GM10248 (cell line): ENCODE measurements at regions of chr4 and their contacts with region 1.

Region 1: DNA sequence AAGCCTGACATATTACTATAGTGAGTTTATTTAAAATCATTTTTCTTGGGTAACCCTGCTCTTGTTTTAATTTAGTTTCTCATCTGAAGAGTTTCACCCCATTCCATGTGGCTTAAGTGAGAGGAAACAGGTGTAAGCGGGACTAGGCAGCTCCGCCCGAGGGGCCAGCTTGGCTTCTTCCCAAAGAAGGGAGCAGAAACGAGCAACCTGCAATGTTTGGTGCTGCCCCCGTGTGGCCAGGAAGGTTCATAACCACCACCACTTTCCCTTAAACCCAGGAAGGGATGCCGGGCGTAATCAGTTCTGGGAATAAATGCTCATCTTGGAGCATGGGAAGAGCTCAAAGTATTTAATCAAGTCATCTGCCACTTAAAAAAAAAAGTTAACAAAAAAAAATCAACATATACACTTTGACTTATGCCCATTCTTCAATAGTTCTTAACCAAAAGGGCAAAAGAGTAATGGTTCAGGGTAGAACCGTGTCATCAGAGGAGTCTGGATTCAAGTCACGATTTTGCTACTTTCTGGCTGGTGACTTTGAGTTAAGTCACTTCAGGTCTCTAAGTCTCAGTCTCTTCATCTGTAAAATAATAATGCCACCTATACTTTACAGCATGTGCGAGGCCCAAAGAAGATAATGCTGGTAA is 147.9 kb downstream of the NSUN7 start:
- DNase-seq: peak; percentile 83
- CTCF ChIP-seq: peak; percentile 72

Region 2: DNA sequence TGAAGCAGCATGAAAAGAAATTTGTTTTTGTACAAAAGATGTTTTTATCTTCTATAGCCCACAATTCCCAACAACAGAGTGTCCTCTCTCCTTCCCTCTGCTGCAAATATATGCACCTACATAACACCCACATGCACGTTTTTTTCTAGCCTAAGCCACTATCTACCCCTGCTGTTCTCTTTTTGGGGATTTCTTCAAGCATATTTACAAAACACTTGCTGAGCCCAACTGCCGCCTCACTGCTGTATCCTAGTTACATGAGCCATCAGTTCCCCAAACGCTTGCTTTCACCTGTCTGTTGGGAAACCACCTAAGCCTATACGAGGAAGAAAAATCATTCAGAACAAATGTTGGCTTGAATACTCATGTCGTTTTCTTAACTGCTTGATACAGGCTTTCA is 435.4 kb before region 1 on chr4:
- CTCF ChIA-PET with region 1: no interaction called
- POLR2A ChIA-PET with region 1: no interaction called
- DNase-seq: peak; percentile 70
- CTCF ChIP-seq: no peak

Region 3: DNA sequence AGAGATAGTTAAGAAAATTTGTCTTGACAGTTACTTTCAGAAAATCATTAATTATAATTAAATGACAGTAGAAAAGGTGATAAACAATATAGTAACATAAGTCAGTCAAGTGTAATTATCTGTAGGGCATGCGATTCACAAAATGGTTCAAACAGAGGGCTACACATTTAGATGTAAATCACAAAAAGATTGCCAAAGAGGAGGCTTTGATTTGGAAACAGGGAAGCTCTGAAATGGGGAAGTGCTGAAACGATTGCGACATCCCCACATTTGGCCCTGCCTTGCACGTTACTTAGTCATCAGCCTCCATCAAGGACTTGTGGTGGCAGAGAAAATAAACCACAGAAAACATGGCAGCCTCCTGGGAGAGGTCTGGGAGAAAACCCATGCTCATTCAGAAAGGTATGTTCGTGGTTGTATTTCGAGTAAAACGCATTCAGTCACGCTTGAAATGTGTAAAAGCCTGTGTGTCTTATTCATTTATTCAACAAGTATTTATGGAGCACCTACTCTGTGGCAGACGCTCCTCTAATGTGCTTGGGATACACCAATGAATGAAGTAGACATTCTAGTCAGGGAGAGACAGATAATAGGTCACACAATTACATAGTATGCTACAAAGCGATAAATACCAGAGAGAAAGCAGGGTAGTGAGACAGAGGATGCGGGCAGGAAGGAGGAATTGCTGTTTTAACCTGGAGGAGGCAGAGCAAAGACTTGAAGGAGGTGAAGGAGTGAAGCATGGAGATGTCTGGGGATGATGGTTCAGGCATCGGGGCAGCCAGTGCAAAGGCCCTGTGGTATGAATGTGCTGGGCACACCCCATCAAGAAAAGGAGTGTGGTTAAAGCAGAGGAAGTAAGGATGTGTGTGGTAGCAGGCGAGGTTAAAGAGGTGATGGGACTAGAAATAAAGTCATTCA is 275.8 kb before region 1 on chr4:
- CTCF ChIA-PET with region 1: no interaction called
- POLR2A ChIA-PET with region 1: no interaction called
- DNase-seq: peak; percentile 56
- CTCF ChIP-seq: no peak

Region 4: DNA sequence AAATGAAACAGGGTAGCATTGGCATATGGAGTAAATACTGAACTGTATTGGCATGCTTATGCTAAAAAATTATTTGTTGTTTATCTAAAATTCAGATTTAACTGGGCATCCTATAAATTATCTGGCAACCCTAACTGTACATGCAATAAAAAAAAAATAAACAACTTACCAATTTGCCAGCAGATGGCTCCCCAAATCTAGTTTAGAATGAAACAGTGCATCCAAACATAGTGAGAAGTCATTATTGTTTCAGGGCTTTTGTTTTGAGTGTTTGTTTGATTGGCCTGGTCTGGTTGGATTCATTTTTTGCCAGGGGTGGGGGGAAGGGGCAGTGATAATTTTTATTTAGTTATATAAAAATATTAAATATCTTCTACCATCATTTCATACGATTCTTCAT is 160.8 kb before region 1 on chr4:
- CTCF ChIA-PET with region 1: interaction called, 27 read pairs
- POLR2A ChIA-PET with region 1: interaction called, 3 read pairs
- DNase-seq: peak; percentile 55
- CTCF ChIP-seq: peak; percentile 37

Region 5: DNA sequence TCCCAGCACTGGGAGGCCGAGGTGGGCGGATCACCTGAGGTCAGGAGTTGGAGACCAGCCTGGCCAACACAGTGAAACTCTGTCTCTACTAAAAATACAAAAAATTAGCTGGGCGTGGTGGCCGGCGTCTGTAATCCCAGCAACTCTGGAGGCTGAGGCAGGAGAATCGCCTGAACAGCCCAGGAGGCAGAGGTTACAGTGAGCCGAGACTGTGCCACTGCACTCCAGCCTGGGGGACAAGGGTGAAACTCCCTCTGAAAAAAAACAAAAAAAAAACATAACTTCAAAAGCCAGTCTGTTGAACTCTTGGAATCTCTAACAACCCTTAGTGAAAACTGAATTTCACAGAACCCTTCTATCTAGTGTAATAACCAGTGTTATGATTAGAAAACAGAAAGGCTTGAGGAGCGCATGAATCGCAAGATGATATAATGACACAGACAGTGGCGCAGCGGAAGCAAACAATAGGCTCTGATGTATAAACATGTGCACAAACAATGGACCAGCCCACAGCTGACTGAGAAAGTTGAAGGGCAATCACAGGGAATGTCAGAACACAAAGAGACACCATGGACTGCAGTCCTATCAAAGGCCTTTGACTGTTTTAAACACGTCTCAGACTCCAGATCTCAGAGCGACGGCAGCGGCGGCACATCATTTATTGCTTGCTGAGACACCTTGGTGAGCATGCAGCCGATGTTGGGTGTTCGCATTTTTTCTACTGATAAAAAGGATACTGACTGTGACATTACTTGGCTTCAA is 66.4 kb before region 1 on chr4:
- CTCF ChIA-PET with region 1: no interaction called
- POLR2A ChIA-PET with region 1: no interaction called
- DNase-seq: no peak
- CTCF ChIP-seq: no peak

Region 6: DNA sequence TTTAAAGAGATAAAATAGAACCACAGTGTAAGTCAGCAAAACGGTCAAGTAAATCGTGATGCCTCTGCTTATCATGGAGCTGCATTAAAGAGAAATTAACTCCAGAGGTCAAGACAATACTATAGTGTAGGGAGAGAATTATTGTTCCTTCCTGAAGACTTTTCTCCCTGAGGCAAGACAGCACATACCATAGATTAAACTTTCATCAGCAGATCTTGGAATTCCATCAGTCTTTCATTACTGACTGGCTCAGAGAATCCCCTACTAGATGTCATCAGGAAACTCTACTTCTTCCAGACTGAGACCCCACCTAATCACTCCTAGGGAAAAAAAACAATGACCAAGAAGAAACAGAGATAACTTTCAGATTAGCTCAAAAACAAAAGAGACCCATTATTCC is 16.6 kb before region 1 on chr4:
- CTCF ChIA-PET with region 1: interaction called, 14 read pairs
- POLR2A ChIA-PET with region 1: no interaction called
- DNase-seq: no peak
- CTCF ChIP-seq: no peak

Region 7: GRCh38 chr4:40887288-40888131 is 10.2 kb before region 1 on chr4:
- CTCF ChIA-PET with region 1: interaction called, 25 read pairs
- POLR2A ChIA-PET with region 1: interaction called, 3 read pairs
- DNase-seq: no peak
- CTCF ChIP-seq: no peak

Region 8: GRCh38 chr4:40908702-40909362 is 11.2 kb after region 1 on chr4:
- CTCF ChIA-PET with region 1: interaction called, 79 read pairs
- POLR2A ChIA-PET with region 1: no interaction called
- DNase-seq: peak; percentile 85
- CTCF ChIP-seq: peak; percentile 89

Region 9: GRCh38 chr4:40924096-40924792 is 26.6 kb after region 1 on chr4:
- CTCF ChIA-PET with region 1: interaction called, 13 read pairs
- POLR2A ChIA-PET with region 1: no interaction called
- DNase-seq: peak; percentile 80
- CTCF ChIP-seq: peak; percentile 53